Transverse colon (tissue), 4 donors: ENCODE measurements at regions of chr16 and their contacts with region 1.

Region 1: DNA sequence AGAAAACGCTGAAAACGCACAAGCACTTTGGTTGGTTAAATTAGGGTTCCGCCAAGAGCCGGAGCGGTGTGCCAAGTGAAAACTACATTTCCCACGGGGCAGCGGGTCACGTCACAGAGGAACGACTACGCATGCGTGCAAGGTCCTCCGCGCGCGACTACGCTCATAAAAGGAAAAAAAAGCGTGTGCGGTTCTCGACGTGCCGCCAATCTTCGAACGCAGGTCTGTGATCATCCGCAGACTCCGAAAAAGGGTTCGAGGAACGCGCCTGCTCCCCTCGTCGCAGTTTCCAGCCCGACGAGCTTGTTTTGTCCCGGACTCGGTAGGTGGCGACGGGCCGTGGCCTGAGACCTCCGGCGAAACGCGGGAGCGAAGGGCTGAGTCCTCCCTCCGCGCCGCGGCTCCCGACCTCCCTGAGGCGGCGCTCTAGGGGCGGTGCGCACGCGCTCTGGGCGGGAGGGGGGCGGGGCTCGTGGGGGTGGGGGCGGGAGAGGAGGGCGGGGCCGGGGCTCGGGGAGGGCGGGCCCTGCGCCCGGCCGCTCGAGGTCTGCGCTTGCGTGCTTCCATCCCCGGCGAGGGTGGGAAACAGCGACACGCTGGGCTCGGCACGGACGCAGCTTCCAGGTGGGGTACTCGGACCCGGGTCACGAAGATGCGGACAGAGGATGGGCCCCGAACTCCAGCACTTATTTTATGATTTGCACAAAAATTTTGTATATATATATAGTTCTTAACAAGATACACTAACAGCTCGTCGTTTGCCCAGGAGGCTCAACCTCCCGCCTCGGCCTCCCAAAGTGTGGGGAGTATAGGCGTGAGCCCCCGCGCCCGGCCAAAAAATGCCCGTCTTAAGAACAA is at the start of gene SGF29:
- DNase-seq: peak; percentile 95
- H3K4me3 ChIP-seq: peak within 1 kb of the TSS; percentile 62 to 80 (median 66)
- H3K27ac ChIP-seq: peak within 1 kb of the TSS; percentile 97 to 99 (median 98)
- H3K4me1 ChIP-seq: peaks cover 5 to 28% (median 13%) of the 10 kb centered on the region in 4 donors
- H3K27me3 ChIP-seq: no peaks in the 10 kb centered on the region
- CTCF ChIP-seq: peak in 2 of 5 experiments; percentile 39
- EP300 ChIP-seq: no peak
- POLR2A ChIP-seq: peak; percentile 94
- total RNA-seq, gene SGF29: 22.1 to 95.0 (median 32.1) TPM

Region 2: GRCh38 chr16:28481986-28482385 is 72.0 kb before region 1 on chr16:
- in situ Hi-C with region 1: loop called in 1 of 4 experiments (anchors 10 kb)
- intact Hi-C with region 1: loop called (anchors 5 kb)
- DNase-seq: no peak
- H3K4me3 ChIP-seq: no peak overlapping the region
- H3K27ac ChIP-seq: peak overlapping the region; percentile 82 to 88 (median 84)
- H3K4me1 ChIP-seq: peaks cover 6 to 40% (median 17%) of the 10 kb centered on the region in 4 donors
- H3K27me3 ChIP-seq: no peaks in the 10 kb centered on the region
- CTCF ChIP-seq: no peak
- EP300 ChIP-seq: no peak
- POLR2A ChIP-seq: no peak

Region 3: GRCh38 chr16:28526201-28527042 is 27.6 kb before region 1 on chr16:
- in situ Hi-C with region 1: no loop called
- intact Hi-C with region 1: no loop called
- DNase-seq: no peak
- H3K4me3 ChIP-seq: no peak overlapping the region
- H3K27ac ChIP-seq: peak overlapping the region in 3 of 4 donors; percentile 13 to 38 (median 30)
- H3K4me1 ChIP-seq: peaks cover 0 to 18% (median 5%) of the 10 kb centered on the region in 4 donors
- H3K27me3 ChIP-seq: no peaks in the 10 kb centered on the region
- CTCF ChIP-seq: no peak
- EP300 ChIP-seq: no peak
- POLR2A ChIP-seq: no peak

Region 4: DNA sequence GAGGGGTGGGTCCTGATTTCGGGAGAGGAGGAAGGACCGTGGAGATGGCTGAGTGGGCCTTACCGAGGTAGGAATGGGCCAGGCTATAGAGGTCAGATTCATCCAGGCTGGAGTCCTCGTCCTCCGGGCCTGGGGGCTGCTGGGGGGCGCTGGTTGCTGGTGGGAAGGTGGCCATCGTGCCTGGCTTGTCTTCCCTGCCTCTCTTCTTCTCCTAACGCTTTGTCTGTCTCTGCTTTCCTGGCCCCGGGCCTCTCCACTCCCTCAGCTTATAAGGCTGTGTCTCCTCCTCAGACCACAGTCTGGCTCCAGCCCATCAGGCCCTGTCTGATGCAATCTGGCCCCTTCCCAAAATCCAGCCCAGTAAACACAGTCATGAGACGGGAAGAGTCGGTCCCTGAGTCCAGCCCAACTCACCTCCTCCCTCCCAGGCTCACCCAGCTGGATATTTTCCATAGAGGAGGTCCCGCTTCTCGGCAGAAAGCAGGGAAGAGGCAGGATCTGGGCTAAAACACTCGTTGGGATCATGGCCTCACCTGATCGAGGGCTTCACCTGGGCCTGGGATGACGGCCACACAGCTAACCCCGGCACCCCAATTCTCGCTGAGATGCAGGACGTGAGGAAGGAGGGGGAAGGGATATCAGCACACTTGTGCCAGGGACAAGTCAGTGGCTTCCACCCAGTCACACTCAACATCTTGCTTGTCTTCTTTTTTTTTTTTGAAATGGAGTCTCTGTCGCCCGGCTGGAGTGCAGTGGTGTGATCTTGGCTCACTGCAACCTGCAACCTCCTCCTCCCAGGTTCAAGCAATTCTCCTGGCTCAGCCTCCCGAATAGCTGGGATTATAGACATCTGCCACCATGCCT is 15.0 kb before region 1 on chr16 and contains the start of gene NUPR1:
- in situ Hi-C with region 1: no loop called
- intact Hi-C with region 1: loop called (anchors 1 kb)
- DNase-seq: peak; percentile 94
- H3K4me3 ChIP-seq: peak within 1 kb of the TSS; percentile 38 to 61 (median 50)
- H3K27ac ChIP-seq: peak within 1 kb of the TSS; percentile 91 to 95 (median 94)
- H3K4me1 ChIP-seq: peaks cover 0 to 75% (median 40%) of the 10 kb centered on the region in 4 donors
- H3K27me3 ChIP-seq: no peaks in the 10 kb centered on the region
- CTCF ChIP-seq: no peak
- EP300 ChIP-seq: peak; percentile 69
- POLR2A ChIP-seq: peak; percentile 90
- total RNA-seq, gene NUPR1: 15.3 to 85.6 (median 23.6) TPM

Region 5: GRCh38 chr16:28863929-28864793 is 310.2 kb after region 1 on chr16:
- in situ Hi-C with region 1: no loop called
- intact Hi-C with region 1: loop called (anchors 5 kb)
- DNase-seq: peak; percentile 65
- H3K4me3 ChIP-seq: peak overlapping the region; percentile 62 to 96 (median 82)
- H3K27ac ChIP-seq: peak overlapping the region; percentile 92 to 99 (median 95)
- H3K4me1 ChIP-seq: peaks cover 13 to 27% (median 24%) of the 10 kb centered on the region in 4 donors
- H3K27me3 ChIP-seq: no peaks in the 10 kb centered on the region
- CTCF ChIP-seq: no peak
- EP300 ChIP-seq: no peak
- POLR2A ChIP-seq: peak; percentile 22